MCF 10A (cell line): ENCODE measurements at regions of chr21 and their contacts with region 1.

Region 1: GRCh38 chr21:33608559-33608958 is 20.1 kb upstream of the DONSON start:
- DNase-seq: no peak
- H3K4me3 Mint-ChIP-seq: no peak overlapping the region
- H3K27ac Mint-ChIP-seq: peak overlapping the region; percentile 41
- H3K4me1 Mint-ChIP-seq: no peaks in the 10 kb centered on the region
- H3K27me3 Mint-ChIP-seq: no peaks in the 10 kb centered on the region
- CTCF ChIP-seq: no peak

Region 2: GRCh38 chr21:33550772-33551660 is 57.5 kb before region 1 on chr21:
- CTCF ChIA-PET with region 1: no interaction called
- POLR2A ChIA-PET with region 1: no interaction called
- intact Hi-C with region 1: no loop called
- DNase-seq: no peak
- H3K4me3 Mint-ChIP-seq: no peak overlapping the region
- H3K27ac Mint-ChIP-seq: no peak overlapping the region
- H3K4me1 Mint-ChIP-seq: peaks cover 13% of the 10 kb centered on the region
- H3K27me3 Mint-ChIP-seq: no peaks in the 10 kb centered on the region
- CTCF ChIP-seq: no peak

Region 3: DNA sequence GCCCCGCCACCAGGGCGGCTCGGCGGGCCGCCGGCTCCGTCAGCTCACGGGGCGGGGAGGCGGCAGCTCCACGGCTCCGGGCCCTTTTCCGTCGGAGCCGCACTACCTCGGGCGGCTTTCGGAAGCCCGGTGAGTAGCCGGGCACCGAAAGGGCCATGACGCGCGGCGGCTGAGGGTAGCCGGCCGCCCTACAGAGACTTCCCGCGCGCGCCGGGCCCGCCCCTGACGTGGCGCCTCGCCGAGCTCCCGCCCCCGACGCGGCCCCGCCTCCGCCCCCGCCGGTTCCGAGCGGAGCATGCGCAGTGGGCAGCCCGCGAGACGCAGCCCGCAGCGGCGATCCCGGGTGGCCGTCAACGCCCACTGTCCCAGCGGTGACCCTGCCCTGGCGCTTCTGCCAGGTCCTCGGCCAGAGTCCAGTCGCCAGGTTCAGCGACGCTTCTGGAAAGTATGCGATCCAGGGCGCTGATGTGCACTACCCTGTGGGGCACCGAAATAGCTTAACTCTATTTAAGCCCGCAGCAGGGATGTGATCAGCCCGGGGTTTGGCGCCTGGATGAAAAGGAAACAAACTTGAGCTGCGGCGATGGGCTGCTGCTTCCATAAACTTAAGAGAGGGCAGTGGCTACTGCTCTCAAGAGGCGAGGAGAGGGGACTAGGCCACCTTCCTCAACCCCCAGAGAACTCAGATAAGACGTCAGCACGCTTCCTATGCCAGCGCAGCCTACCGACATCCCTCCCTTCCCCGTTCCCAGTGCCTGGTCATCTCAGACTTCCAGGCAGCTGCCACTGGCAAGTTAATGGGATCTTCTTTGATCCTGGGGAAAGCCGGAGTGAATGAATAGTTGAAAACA is 19.8 kb before region 1 on chr21 and contains the start of gene DONSON:
- CTCF ChIA-PET with region 1: interaction called, 19 read pairs
- POLR2A ChIA-PET with region 1: interaction called, 8 read pairs
- intact Hi-C with region 1: no loop called
- DNase-seq: peak; percentile 80
- H3K4me3 Mint-ChIP-seq: peak within 1 kb of the TSS; percentile 88
- H3K27ac Mint-ChIP-seq: peak within 1 kb of the TSS; percentile 67
- H3K4me1 Mint-ChIP-seq: peaks cover 5% of the 10 kb centered on the region
- H3K27me3 Mint-ChIP-seq: no peaks in the 10 kb centered on the region
- CTCF ChIP-seq: no peak
- total RNA-seq, gene DONSON: 9.3 and 10.0 TPM in 2 replicates

Region 4: GRCh38 chr21:33598051-33598450 is 10.5 kb before region 1 on chr21:
- CTCF ChIA-PET with region 1: interaction called, 10 read pairs
- POLR2A ChIA-PET with region 1: interaction called, 6 read pairs
- intact Hi-C with region 1: no loop called
- DNase-seq: no peak
- H3K4me3 Mint-ChIP-seq: no peak overlapping the region
- H3K27ac Mint-ChIP-seq: no peak overlapping the region
- H3K4me1 Mint-ChIP-seq: no peaks in the 10 kb centered on the region
- H3K27me3 Mint-ChIP-seq: no peaks in the 10 kb centered on the region
- CTCF ChIP-seq: no peak

Region 5: DNA sequence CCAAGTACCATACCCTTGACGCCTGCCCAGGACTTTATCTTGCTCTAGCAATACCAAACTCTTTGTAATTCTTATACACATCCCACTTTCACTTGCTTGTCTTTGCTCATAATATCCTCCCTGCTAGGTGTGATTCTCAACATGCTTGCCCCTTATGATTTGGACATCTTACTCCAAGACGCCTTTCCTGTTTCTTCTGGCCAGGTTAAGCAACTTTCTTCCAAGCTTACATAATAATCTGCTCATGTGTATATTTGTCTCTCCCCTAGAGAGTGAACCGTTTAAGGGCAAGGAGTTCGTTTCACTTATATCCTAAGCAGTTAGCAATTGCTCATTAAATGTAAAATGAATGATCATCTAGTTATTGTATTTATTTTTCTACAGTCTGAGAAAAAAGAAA is 11.2 kb after region 1 on chr21:
- CTCF ChIA-PET with region 1: interaction called, 18 read pairs
- POLR2A ChIA-PET with region 1: interaction called, 4 read pairs
- intact Hi-C with region 1: no loop called
- DNase-seq: no peak
- H3K4me3 Mint-ChIP-seq: no peak overlapping the region
- H3K27ac Mint-ChIP-seq: no peak overlapping the region
- H3K4me1 Mint-ChIP-seq: no peaks in the 10 kb centered on the region
- H3K27me3 Mint-ChIP-seq: no peaks in the 10 kb centered on the region
- CTCF ChIP-seq: no peak

Region 6: GRCh38 chr21:33703750-33704606 is 95.4 kb after region 1 on chr21:
- CTCF ChIA-PET with region 1: no interaction called
- POLR2A ChIA-PET with region 1: no interaction called
- intact Hi-C with region 1: no loop called
- DNase-seq: no peak
- H3K4me3 Mint-ChIP-seq: no peak overlapping the region
- H3K27ac Mint-ChIP-seq: peak overlapping the region; percentile 1
- H3K4me1 Mint-ChIP-seq: no peaks in the 10 kb centered on the region
- H3K27me3 Mint-ChIP-seq: no peaks in the 10 kb centered on the region
- CTCF ChIP-seq: no peak

Region 7: DNA sequence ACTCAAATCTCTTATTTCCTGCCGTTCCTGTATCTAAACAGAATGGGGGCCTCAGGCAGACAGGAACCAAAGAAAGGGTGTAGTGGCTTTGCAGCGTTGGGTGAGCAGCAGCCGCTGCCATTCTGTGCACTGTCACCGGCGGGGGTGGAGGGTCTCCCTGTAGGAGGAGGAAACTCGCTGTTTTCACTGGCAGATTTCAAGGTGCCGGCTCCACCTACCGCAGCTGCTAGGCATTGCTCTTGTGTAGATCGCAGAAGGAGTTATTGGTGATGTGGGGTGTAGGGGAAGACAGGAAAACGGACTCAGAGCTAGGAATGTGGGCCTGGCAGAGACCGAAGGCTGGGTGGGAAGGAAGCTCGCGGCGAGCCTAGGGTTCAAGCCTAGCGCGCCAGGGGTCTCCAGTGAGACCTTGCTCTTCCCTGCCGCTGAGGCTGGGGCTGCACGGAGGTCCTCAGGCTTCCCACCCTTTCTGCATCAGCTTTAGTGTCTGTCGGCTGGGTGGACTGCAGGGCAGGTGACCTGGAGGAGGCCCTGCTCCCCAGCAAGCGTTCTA is 286.3 kb after region 1 on chr21:
- CTCF ChIA-PET with region 1: interaction called, 10 read pairs
- POLR2A ChIA-PET with region 1: interaction called, 3 read pairs
- intact Hi-C with region 1: loop called (anchors 2 kb)
- DNase-seq: peak; percentile 68
- H3K4me3 Mint-ChIP-seq: no peak overlapping the region
- H3K27ac Mint-ChIP-seq: no peak overlapping the region
- H3K4me1 Mint-ChIP-seq: peaks cover 7% of the 10 kb centered on the region
- H3K27me3 Mint-ChIP-seq: no peaks in the 10 kb centered on the region
- CTCF ChIP-seq: peak; percentile 36

Region 8: GRCh38 chr21:33901412-33902288 is 293.1 kb after region 1 on chr21:
- CTCF ChIA-PET with region 1: interaction called, 4 read pairs
- POLR2A ChIA-PET with region 1: no interaction called
- intact Hi-C with region 1: loop called (anchors 2 kb)
- DNase-seq: peak; percentile 64
- H3K4me3 Mint-ChIP-seq: no peak overlapping the region
- H3K27ac Mint-ChIP-seq: no peak overlapping the region
- H3K4me1 Mint-ChIP-seq: no peaks in the 10 kb centered on the region
- H3K27me3 Mint-ChIP-seq: no peaks in the 10 kb centered on the region
- CTCF ChIP-seq: peak; percentile 55